ENCODE measurements at regions of chr13 and their contacts with region 1.

Region 1: GRCh38 chr13:21476893-21477472 is 17.9 kb upstream of the ZDHHC20 start:
- DNase-seq: no peak
- H3K4me3 ChIP-seq: peak overlapping the region; percentile 20 to 33
- H3K27ac ChIP-seq: no peak overlapping the region
- H3K4me1 ChIP-seq: peaks cover 10% of the 10 kb centered on the region
- H3K27me3 ChIP-seq: no peaks in the 10 kb centered on the region
- CTCF ChIP-seq: peak; percentile 91 to 94 (median 92)
- POLR2A ChIP-seq: no peak

Region 2: GRCh38 chr13:20945952-20946383 is 531.0 kb before region 1 on chr13:
- intact Hi-C with region 1: loop called (anchors 2 kb)
- DNase-seq: no peak
- H3K4me3 ChIP-seq: peak overlapping the region; percentile 5
- H3K27ac ChIP-seq: no peak overlapping the region
- H3K4me1 ChIP-seq: peaks cover 6% of the 10 kb centered on the region
- H3K27me3 ChIP-seq: no peaks in the 10 kb centered on the region
- CTCF ChIP-seq: no peak
- POLR2A ChIP-seq: no peak

Region 3: DNA sequence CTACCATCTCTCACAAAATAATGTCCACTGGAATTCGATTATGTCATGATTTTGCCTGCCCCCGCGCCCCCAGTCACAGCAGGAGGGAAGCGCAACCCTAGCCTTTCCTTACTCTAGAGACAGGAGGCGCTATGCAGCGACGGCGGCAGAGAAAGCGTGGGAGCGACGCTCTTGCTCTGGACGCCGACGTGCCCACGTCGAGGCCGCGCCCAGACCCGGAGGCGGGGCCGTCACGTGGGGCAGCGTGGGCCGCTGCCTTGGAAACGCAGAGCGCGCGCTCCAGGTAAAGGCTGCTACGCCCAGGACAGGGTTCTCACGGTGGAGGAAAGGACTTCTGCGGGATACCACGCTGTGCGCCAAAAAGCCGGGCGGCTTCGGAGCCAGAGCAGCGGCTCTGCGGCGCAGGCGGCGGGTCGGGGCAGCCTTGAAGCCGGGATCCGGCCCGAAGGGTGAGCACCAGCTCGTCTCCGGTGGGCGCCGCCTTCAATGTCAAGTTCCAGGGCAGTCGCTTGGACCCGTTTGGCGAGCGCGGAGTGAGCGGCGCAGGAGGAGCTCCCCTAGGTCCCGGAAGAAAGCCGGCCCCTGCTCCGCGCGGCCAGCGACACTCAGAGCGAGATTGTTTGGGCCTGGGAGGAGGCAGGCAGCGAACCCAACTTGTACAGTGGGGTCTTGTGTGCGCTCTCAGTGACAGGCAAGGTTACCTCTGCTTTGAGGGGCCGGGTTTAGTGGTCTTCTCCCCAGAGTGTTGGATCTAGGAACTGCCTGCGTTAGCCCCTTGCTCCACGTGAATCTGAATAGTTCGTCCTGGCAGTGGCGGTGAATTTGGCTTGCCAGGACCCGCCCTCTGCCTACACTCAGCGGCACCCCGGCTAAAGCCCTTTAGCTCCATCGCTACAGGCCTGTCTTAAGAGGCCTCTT is 178.8 kb before region 1 on chr13:
- intact Hi-C with region 1: loop called (anchors 5 kb)
- DNase-seq: no peak
- H3K4me3 ChIP-seq: peak overlapping the region; percentile 79 to 81
- H3K27ac ChIP-seq: peak overlapping the region; percentile 76
- H3K4me1 ChIP-seq: peaks cover 32% of the 10 kb centered on the region
- H3K27me3 ChIP-seq: no peaks in the 10 kb centered on the region
- CTCF ChIP-seq: peak; percentile 87 to 92 (median 88)
- POLR2A ChIP-seq: peak in 1 of 2 donors; percentile 18

Region 4: GRCh38 chr13:21511849-21512248 is 34.9 kb after region 1 on chr13:
- intact Hi-C with region 1: no loop called
- DNase-seq: no peak
- H3K4me3 ChIP-seq: no peak overlapping the region
- H3K27ac ChIP-seq: no peak overlapping the region
- H3K4me1 ChIP-seq: no peaks in the 10 kb centered on the region
- H3K27me3 ChIP-seq: no peaks in the 10 kb centered on the region
- CTCF ChIP-seq: no peak
- POLR2A ChIP-seq: no peak

Measured in vagina (tissue), 2 donors.